Motor neuron (in vitro differentiated cells): ENCODE measurements at regions of chr11 and their contacts with region 1.

Region 1: DNA sequence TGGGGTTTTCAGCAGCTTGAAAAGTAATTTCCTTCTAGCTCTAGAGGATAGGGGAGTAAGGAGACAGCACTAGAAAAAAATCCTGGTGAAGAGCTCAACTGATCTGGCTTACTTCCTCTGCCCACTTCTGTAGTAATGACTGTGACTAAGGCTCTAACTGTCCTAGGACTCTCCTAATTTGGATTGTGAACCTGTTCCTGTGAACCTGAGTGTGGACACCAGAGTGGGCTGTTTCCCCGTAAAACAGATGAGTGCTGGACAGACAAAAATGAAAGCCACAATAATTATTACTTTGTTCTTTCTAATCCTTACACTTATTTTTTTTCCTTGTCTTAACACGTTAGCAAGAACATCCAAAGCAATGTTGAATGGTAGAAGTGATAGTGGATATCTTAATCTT is 154.1 kb downstream of the AASDHPPT start:
- ATAC-seq: peak in 3 of 8 experiments; percentile 64 to 77 (median 74)
- H3K4me3 ChIP-seq: no peak overlapping the region
- H3K27ac ChIP-seq: no peak overlapping the region
- H3K4me1 ChIP-seq: no peaks in the 10 kb centered on the region

Region 2: GRCh38 chr11:106344394-106344793 is 112.8 kb after region 1 on chr11:
- in situ Hi-C with region 1: loop called in 1 of 9 experiments (anchors 25 kb)
- ATAC-seq: no peak
- H3K4me3 ChIP-seq: no peak overlapping the region
- H3K27ac ChIP-seq: no peak overlapping the region
- H3K4me1 ChIP-seq: no peaks in the 10 kb centered on the region